Caco-2 (cell line): ENCODE measurements at regions of chr7 and their contacts with region 1.

Region 1: GRCh38 chr7:45157653-45158401 is at the start of gene RAMP3:
- DNase-seq: no peak
- H3K4me3 ChIP-seq: no peak within 1 kb of the TSS
- H3K4me3 Mint-ChIP-seq: no peak within 1 kb of the TSS
- H3K27ac Mint-ChIP-seq: no peak within 1 kb of the TSS
- H3K4me1 ChIP-seq: no peaks in the 10 kb centered on the region
- H3K4me1 Mint-ChIP-seq: no peaks in the 10 kb centered on the region
- H3K27me3 ChIP-seq: no peaks in the 10 kb centered on the region
- H3K27me3 Mint-ChIP-seq: peaks cover 17% of the 10 kb centered on the region
- CTCF ChIP-seq: no peak
- total RNA-seq, gene RAMP3: not detected in 2 replicates

Region 2: DNA sequence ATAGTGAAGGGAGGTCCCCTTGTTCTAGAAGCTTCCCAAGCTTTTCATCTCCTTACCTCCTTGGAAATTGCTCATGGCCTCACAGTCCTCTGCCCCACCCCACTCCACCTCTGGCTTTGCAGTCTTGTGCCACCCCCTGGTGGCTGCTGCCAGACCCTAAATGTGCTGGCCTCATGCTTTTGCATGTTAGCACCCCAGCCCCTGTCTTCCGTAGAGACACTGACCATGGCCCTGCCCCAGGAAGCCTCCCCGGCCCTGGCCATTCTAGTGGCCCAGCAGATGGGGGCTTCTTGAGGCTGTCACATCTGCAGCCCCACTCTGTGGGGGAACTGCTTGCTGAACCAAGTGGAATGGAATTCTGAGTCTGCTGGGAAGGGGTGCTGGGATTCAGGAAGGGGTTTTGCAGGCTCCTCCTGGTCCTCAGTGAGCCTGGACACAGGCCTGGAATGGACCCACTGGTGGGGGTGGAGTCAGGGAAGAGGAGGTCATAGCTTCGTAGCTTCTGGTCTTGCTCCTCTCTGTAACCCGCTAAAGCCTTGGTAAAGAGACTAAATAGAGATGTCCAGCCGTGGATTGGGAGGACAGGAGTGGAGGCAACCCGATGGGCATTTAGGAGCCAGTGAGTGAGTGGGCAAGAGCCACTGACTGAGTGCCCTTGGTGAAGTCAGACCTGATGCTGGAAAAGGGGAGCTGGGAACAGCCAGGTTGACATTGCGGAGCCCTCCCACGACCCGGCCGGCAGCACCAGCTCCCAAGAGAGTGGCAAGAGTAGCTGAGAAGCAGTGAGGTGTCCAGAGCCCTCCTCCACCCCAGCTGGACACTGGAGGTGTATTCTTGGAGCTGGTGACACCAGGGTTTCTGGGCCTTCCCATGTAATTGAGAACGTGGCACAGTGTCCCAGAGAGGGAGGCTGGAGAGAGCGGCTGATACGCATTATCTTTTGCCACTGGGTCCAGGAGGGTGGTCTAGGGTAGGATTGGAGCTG is 20.7 kb after region 1 on chr7:
- CTCF ChIA-PET with region 1: no interaction called
- POLR2A ChIA-PET with region 1: no interaction called
- intact Hi-C with region 1: loop called (anchors 1 kb)
- DNase-seq: peak; percentile 32 to 38
- H3K4me3 ChIP-seq: no peak overlapping the region
- H3K4me3 Mint-ChIP-seq: no peak overlapping the region
- H3K27ac Mint-ChIP-seq: no peak overlapping the region
- H3K4me1 ChIP-seq: no peaks in the 10 kb centered on the region
- H3K4me1 Mint-ChIP-seq: no peaks in the 10 kb centered on the region
- H3K27me3 ChIP-seq: no peaks in the 10 kb centered on the region
- H3K27me3 Mint-ChIP-seq: peaks cover 24% of the 10 kb centered on the region
- CTCF ChIP-seq: peak; percentile 28 to 48

Region 3: DNA sequence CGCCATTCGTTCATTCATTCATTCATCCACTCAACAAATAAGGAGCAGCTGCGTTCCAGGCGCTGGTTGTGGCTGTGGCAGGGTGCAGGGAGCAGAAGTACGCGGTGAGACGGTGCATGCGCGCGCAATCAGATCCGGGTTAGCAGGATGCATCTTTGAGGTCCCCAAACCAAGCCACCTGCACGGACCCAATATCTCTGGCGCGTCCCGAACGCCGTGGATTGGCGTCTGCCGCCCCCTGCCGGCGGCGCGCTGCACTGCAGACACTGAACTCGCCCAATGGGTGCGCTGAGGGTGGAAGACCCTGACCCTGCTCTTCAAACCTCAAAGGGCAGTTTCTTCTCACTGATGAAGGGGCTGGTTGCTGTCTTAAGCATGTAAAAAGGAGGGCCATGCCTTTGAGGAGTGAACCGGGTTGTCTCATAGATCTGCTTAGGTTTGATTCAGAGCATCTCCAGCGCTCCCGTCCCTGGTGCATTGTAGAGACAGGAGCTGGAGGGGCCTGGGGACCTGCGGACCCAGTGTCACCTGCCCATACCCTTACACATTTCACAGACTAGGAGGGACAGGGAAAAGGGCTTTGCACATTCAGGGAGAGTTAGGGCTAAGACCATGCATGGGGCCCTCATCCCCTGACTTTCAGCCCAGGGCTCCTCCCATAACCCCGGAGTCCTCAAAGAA is 102.3 kb after region 1 on chr7:
- CTCF ChIA-PET with region 1: interaction called, 3 read pairs
- POLR2A ChIA-PET with region 1: no interaction called
- intact Hi-C with region 1: loop called (anchors 1 kb)
- DNase-seq: peak in 1 of 2 experiments; percentile 76
- H3K4me3 ChIP-seq: no peak overlapping the region
- H3K4me3 Mint-ChIP-seq: no peak overlapping the region
- H3K27ac Mint-ChIP-seq: no peak overlapping the region
- H3K4me1 ChIP-seq: no peaks in the 10 kb centered on the region
- H3K4me1 Mint-ChIP-seq: no peaks in the 10 kb centered on the region
- H3K27me3 ChIP-seq: peaks cover 2% of the 10 kb centered on the region
- H3K27me3 Mint-ChIP-seq: peaks cover 11% of the 10 kb centered on the region
- CTCF ChIP-seq: peak; percentile 92 to 98

Region 4: GRCh38 chr7:45663167-45663921 is 505.5 kb after region 1 on chr7:
- CTCF ChIA-PET with region 1: no interaction called
- POLR2A ChIA-PET with region 1: no interaction called
- intact Hi-C with region 1: loop called (anchors 10 kb)
- DNase-seq: peak in 1 of 2 experiments; percentile 74
- H3K4me3 ChIP-seq: no peak overlapping the region
- H3K4me3 Mint-ChIP-seq: no peak overlapping the region
- H3K27ac Mint-ChIP-seq: peak overlapping the region; percentile 16
- H3K4me1 ChIP-seq: no peaks in the 10 kb centered on the region
- H3K4me1 Mint-ChIP-seq: no peaks in the 10 kb centered on the region
- H3K27me3 ChIP-seq: no peaks in the 10 kb centered on the region
- H3K27me3 Mint-ChIP-seq: peaks cover 2% of the 10 kb centered on the region
- CTCF ChIP-seq: peak; percentile 85 to 92